Naive thymus-derived CD4-positive, alpha-beta T cell (primary cell): ENCODE measurements at regions of chr1 and their contacts with region 1.

Region 1: GRCh38 chr1:247210376-247211117 is 38.7 kb upstream of the ZNF124 start:
- DNase-seq: peak; percentile 88 to 95 (median 91)
- ATAC-seq: peak; percentile 99
- H3K4me3 ChIP-seq: peak overlapping the region; percentile 77
- H3K4me3 Mint-ChIP-seq: peak overlapping the region; percentile 88 to 97 (median 95)
- H3K27ac ChIP-seq: peak overlapping the region; percentile 83
- H3K27ac Mint-ChIP-seq: peak overlapping the region; percentile 92 to 97 (median 94)
- H3K4me1 ChIP-seq: peaks cover 12 to 13% of the 10 kb centered on the region in 2 donors
- H3K4me1 Mint-ChIP-seq: peaks cover 21 to 84% (median 71%) of the 10 kb centered on the region in 7 donors
- H3K27me3 ChIP-seq: no peaks in the 10 kb centered on the region
- H3K27me3 Mint-ChIP-seq: peaks cover 0 to 3% (median 0%) of the 10 kb centered on the region in 5 donors

Region 2: GRCh38 chr1:246782120-246782900 is 428.2 kb before region 1 on chr1:
- CTCF ChIA-PET with region 1: no interaction called
- POLR2A ChIA-PET with region 1: no interaction called
- intact Hi-C with region 1: no loop called
- DNase-seq: peak in 2 of 9 donors; percentile 4 to 20
- ATAC-seq: peak; percentile 52
- H3K4me3 ChIP-seq: no peak overlapping the region
- H3K4me3 Mint-ChIP-seq: peak overlapping the region in 8 of 10 donors; percentile 1 to 65 (median 34)
- H3K27ac ChIP-seq: no peak overlapping the region
- H3K27ac Mint-ChIP-seq: peak overlapping the region in 4 of 9 donors; percentile 15 to 71 (median 56)
- H3K4me1 ChIP-seq: peaks cover 0 to 6% of the 10 kb centered on the region in 2 donors
- H3K4me1 Mint-ChIP-seq: peaks cover 6 to 31% (median 22%) of the 10 kb centered on the region in 7 donors
- H3K27me3 ChIP-seq: no peaks in the 10 kb centered on the region
- H3K27me3 Mint-ChIP-seq: peaks cover 0 to 9% (median 0%) of the 10 kb centered on the region in 5 donors

Region 3: GRCh38 chr1:247103859-247104591 is 106.5 kb before region 1 on chr1 and contains the start of gene ZNF669:
- CTCF ChIA-PET with region 1: no interaction called
- POLR2A ChIA-PET with region 1: interaction called, 5 read pairs
- intact Hi-C with region 1: loop called (anchors 1 kb)
- DNase-seq: peak; percentile 84 to 91 (median 89)
- ATAC-seq: peak; percentile 99
- H3K4me3 ChIP-seq: peak within 1 kb of the TSS; percentile 96
- H3K4me3 Mint-ChIP-seq: peak within 1 kb of the TSS; percentile 83 to 93 (median 91)
- H3K27ac ChIP-seq: peak within 1 kb of the TSS; percentile 82
- H3K27ac Mint-ChIP-seq: peak within 1 kb of the TSS; percentile 70 to 93 (median 81)
- H3K4me1 ChIP-seq: peaks cover 3 to 4% of the 10 kb centered on the region in 2 donors
- H3K4me1 Mint-ChIP-seq: peaks cover 6 to 24% (median 16%) of the 10 kb centered on the region in 7 donors
- H3K27me3 ChIP-seq: no peaks in the 10 kb centered on the region
- H3K27me3 Mint-ChIP-seq: peaks cover 15 to 25% (median 21%) of the 10 kb centered on the region in 5 donors
- total RNA-seq, gene ZNF669: 7.9 to 15.8 (median 11.5) TPM

Region 4: GRCh38 chr1:247172996-247173395 is 37.6 kb before region 1 on chr1:
- CTCF ChIA-PET with region 1: interaction called, 4 read pairs
- POLR2A ChIA-PET with region 1: no interaction called
- intact Hi-C with region 1: loop called (anchors 2 kb)
- DNase-seq: no peak
- ATAC-seq: peak; percentile 1
- H3K4me3 ChIP-seq: no peak overlapping the region
- H3K4me3 Mint-ChIP-seq: peak overlapping the region in 1 of 10 donors; percentile 29
- H3K27ac ChIP-seq: no peak overlapping the region
- H3K27ac Mint-ChIP-seq: peak overlapping the region in 1 of 9 donors; percentile 59
- H3K4me1 ChIP-seq: no peaks in the 10 kb centered on the region
- H3K4me1 Mint-ChIP-seq: peaks cover 0 to 22% (median 11%) of the 10 kb centered on the region in 7 donors
- H3K27me3 ChIP-seq: no peaks in the 10 kb centered on the region
- H3K27me3 Mint-ChIP-seq: no peaks in the 10 kb centered on the region

Region 5: GRCh38 chr1:247373721-247374141 is 163.2 kb after region 1 on chr1:
- CTCF ChIA-PET with region 1: no interaction called
- POLR2A ChIA-PET with region 1: no interaction called
- intact Hi-C with region 1: loop called in 1 of 2 experiments (anchors 2 kb)
- DNase-seq: peak; percentile 37 to 64 (median 48)
- ATAC-seq: peak; percentile 84
- H3K4me3 ChIP-seq: peak overlapping the region; percentile 46
- H3K4me3 Mint-ChIP-seq: peak overlapping the region in 9 of 10 donors; percentile 14 to 70 (median 58)
- H3K27ac ChIP-seq: no peak overlapping the region
- H3K27ac Mint-ChIP-seq: no peak overlapping the region
- H3K4me1 ChIP-seq: no peaks in the 10 kb centered on the region
- H3K4me1 Mint-ChIP-seq: peaks cover 0 to 10% (median 7%) of the 10 kb centered on the region in 7 donors
- H3K27me3 ChIP-seq: no peaks in the 10 kb centered on the region
- H3K27me3 Mint-ChIP-seq: peaks cover 4 to 19% (median 6%) of the 10 kb centered on the region in 5 donors

Region 6: DNA sequence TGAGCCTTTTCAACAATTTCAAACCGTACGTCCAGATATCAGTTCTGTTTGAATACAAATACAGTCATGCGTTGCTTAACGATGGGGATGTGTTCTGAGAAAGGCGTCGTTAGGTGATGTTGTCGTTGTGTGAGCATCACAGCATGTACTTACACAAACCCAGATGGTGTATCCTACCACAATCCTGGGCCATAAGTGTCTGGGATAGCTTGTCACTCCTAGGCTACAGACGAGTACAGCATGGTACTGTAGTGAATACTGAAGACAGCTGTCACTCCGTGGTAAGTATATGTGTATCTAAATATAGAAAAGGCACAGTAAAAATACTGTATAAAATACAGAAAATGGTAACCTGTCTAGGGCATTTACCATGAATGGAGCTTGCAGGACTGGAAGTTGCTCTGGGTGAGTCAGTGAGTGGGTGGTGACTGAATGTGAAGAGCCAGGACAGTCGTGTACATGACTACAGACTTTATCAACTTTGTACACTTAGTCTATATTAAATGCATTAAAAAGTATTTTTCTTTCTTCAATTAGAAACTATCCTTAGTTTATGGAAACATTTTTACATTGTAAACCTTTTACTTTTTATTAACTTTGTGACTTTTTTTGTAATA is 674.4 kb after region 1 on chr1:
- CTCF ChIA-PET with region 1: no interaction called
- POLR2A ChIA-PET with region 1: no interaction called
- intact Hi-C with region 1: no loop called
- DNase-seq: no peak
- ATAC-seq: no peak
- H3K4me3 ChIP-seq: no peak overlapping the region
- H3K4me3 Mint-ChIP-seq: no peak overlapping the region
- H3K27ac ChIP-seq: no peak overlapping the region
- H3K27ac Mint-ChIP-seq: no peak overlapping the region
- H3K4me1 ChIP-seq: no peaks in the 10 kb centered on the region
- H3K4me1 Mint-ChIP-seq: no peaks in the 10 kb centered on the region
- H3K27me3 ChIP-seq: no peaks in the 10 kb centered on the region
- H3K27me3 Mint-ChIP-seq: peaks cover 0 to under 1% (median 0%) of the 10 kb centered on the region in 5 donors